Breast epithelium (tissue), 4 donors: ENCODE measurements at regions of chr13 and their contacts with region 1.

Region 1: GRCh38 chr13:79349011-79349410 is 57.0 kb downstream of the RBM26 start:
- DNase-seq: no peak
- H3K4me3 ChIP-seq: no peak overlapping the region
- H3K27ac ChIP-seq: no peak overlapping the region
- H3K4me1 ChIP-seq: no peaks in the 10 kb centered on the region
- H3K27me3 ChIP-seq: no peaks in the 10 kb centered on the region
- CTCF ChIP-seq: no peak
- POLR2A ChIP-seq: no peak

Region 2: DNA sequence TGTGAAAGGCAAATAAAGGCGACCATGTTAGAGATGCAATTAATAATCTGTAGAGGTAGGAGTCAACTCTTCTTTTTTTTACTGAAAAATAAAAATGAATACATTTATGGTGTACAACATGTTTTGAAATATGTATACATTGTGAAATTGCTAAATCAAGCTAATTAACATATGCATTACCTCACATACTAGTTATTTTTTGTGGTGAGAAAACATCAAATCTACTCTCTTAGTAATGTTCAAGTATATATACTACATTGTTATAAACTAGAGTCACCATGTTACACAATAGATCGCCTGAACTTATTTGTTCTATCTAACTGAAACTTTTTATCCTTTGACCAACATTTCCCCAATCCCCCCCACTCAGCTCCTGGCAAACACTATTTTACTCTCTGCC is 888.8 kb before region 1 on chr13:
- intact Hi-C with region 1: loop called (anchors 5 kb)
- DNase-seq: no peak
- H3K4me3 ChIP-seq: no peak overlapping the region
- H3K27ac ChIP-seq: no peak overlapping the region
- H3K4me1 ChIP-seq: no peaks in the 10 kb centered on the region
- H3K27me3 ChIP-seq: no peaks in the 10 kb centered on the region
- CTCF ChIP-seq: no peak
- POLR2A ChIP-seq: no peak